Dendritic cell treated with granulocyte-macrophage colony-stimulating factor and Interleukin-4, amounts not matched to agents 40 ng/mL and 50 ng/mL, for 4 days (primary cell): ENCODE measurements at regions of chr12 and their contacts with region 1.

Region 1: GRCh38 chr12:76176940-76177339 is 92.5 kb upstream of the NAP1L1 start:
- H3K4me3 Mint-ChIP-seq: no peak overlapping the region
- H3K27ac Mint-ChIP-seq: no peak overlapping the region
- H3K4me1 Mint-ChIP-seq: peaks cover 29% of the 10 kb centered on the region
- H3K27me3 Mint-ChIP-seq: peaks cover 10% of the 10 kb centered on the region

Region 2: GRCh38 chr12:75977952-75978671 is 198.8 kb before region 1 on chr12:
- intact Hi-C with region 1: loop called (anchors 10 kb)
- H3K4me3 Mint-ChIP-seq: peak overlapping the region; percentile 15
- H3K27ac Mint-ChIP-seq: peak overlapping the region; percentile 75
- H3K4me1 Mint-ChIP-seq: peaks cover 71% of the 10 kb centered on the region
- H3K27me3 Mint-ChIP-seq: no peaks in the 10 kb centered on the region

Region 3: GRCh38 chr12:76042147-76042546 is 134.8 kb before region 1 on chr12:
- intact Hi-C with region 1: no loop called
- H3K4me3 Mint-ChIP-seq: no peak overlapping the region
- H3K27ac Mint-ChIP-seq: no peak overlapping the region
- H3K4me1 Mint-ChIP-seq: peaks cover 6% of the 10 kb centered on the region
- H3K27me3 Mint-ChIP-seq: peaks cover 5% of the 10 kb centered on the region